ENCODE measurements at regions of chr9 and their contacts with region 1.

Region 1: DNA sequence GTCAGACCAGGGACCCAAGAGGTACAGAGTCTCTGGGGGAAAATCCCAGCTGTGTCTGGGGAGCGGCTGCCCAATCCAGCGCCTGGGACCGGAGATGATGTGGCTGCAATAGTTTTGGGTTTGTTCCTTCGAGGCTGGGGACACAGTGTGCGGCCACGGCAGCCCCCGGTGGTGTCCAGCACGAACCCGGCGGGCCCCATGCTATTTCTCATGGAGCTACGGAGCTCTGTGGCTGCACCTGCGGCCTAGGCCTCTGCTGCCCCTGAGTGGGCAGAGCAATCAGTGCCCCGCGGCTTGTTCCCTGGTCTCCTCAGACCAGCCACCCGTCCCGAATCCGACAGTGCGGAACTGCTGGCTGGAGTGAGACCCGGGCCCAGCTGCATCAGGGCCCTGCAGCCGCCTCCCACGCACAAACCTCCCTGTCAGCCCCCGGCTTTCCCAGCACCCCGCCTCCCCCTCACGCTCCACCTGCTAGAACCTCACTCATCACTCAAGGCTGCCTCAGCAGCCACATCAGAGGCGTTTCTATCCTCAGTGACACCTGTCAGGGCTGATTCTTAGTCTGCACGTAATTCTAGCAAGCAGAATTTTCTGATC is 29.0 kb downstream of the SARDH start:
- DNase-seq: peak; percentile 47 to 90 (median 73)
- ATAC-seq: peak; percentile 99
- H3K4me3 ChIP-seq: no peak overlapping the region
- H3K4me3 Mint-ChIP-seq: peak overlapping the region; percentile 60
- H3K27ac ChIP-seq: no peak overlapping the region
- H3K27ac Mint-ChIP-seq: peak overlapping the region; percentile 85
- H3K4me1 ChIP-seq: peaks cover 57% of the 10 kb centered on the region
- H3K4me1 Mint-ChIP-seq: peaks cover 39% of the 10 kb centered on the region
- H3K27me3 ChIP-seq: no peaks in the 10 kb centered on the region
- H3K27me3 Mint-ChIP-seq: no peaks in the 10 kb centered on the region
- CTCF ChIP-seq: peak; percentile 8

Region 2: GRCh38 chr9:133609311-133610098 is 99.6 kb before region 1 on chr9 and contains the start of gene FAM163B:
- CTCF ChIA-PET with region 1: no interaction called
- POLR2A ChIA-PET with region 1: no interaction called
- intact Hi-C with region 1: loop called in 1 of 2 experiments (anchors 5 kb)
- DNase-seq: peak in 13 of 14 experiments; percentile 11 to 76 (median 36)
- ATAC-seq: peak; percentile 78
- H3K4me3 ChIP-seq: no peak within 1 kb of the TSS
- H3K4me3 Mint-ChIP-seq: no peak within 1 kb of the TSS
- H3K27ac ChIP-seq: no peak within 1 kb of the TSS
- H3K27ac Mint-ChIP-seq: no peak within 1 kb of the TSS
- H3K4me1 ChIP-seq: peaks cover 8% of the 10 kb centered on the region
- H3K4me1 Mint-ChIP-seq: no peaks in the 10 kb centered on the region
- H3K27me3 ChIP-seq: peaks cover 21 to 38% of the 10 kb centered on the region in 2 experiments
- H3K27me3 Mint-ChIP-seq: peaks cover 52% of the 10 kb centered on the region
- CTCF ChIP-seq: no peak
- total RNA-seq, gene FAM163B: not detected

Region 3: DNA sequence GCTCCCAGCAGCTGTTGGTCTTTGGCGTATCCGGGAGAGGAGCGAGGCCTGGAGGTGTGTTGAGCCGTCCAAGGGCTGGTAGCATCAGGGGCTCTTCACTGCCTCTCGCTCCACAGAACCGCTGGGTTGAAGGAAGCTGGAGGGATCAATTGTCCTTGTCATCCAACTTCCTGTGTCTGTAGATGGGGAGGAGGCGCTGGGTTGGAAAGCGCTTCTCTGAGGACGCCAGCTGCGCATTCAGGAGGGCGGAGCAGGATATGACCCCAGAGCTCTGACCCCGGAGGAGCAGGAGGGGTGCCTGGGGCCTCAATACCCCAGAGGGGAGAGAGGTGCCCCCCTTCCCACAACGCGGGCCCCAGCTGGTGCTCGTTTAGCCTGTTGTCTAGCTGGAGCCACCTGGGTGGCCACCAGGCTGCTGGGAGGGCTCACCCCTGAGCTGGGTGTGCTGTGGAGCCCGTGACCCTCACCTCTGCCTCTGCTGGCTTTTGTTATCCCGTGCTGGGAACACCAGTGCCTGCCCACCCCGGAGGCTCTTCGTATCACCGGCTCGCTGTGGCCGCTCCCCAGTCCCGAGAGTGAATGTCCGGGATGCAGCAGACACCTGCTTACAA is 74.9 kb before region 1 on chr9:
- CTCF ChIA-PET with region 1: no interaction called
- POLR2A ChIA-PET with region 1: no interaction called
- intact Hi-C with region 1: no loop called
- DNase-seq: no peak
- ATAC-seq: no peak
- H3K4me3 ChIP-seq: no peak overlapping the region
- H3K4me3 Mint-ChIP-seq: no peak overlapping the region
- H3K27ac ChIP-seq: no peak overlapping the region
- H3K27ac Mint-ChIP-seq: no peak overlapping the region
- H3K4me1 ChIP-seq: no peaks in the 10 kb centered on the region
- H3K4me1 Mint-ChIP-seq: no peaks in the 10 kb centered on the region
- H3K27me3 ChIP-seq: no peaks in the 10 kb centered on the region
- H3K27me3 Mint-ChIP-seq: no peaks in the 10 kb centered on the region
- CTCF ChIP-seq: no peak

Region 4: DNA sequence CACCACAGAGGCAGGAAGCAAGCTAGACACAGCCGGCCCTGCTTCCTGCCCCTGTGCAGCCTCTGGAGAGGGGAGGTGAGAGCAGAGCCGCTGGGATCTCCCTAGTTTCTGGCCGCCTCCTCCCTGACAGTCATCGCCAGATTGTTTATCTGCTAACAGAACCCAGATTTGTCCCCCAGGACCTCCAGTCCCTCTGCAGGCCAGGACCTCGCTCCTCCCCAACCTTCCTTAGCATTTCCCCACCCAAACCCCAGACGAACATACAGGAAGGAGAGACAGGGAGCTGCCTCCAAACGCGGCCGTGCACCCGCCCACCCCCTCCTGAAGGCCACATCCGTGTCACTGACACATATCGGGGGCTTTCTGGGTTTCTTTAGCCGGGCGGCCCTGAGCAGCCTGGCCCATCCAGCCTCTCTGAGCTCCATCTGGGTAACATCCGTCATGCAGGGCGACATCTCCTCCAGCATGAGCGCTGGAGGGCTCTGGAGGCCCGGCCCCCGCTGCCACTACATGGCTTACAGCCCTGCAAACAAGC is 25.5 kb before region 1 on chr9:
- CTCF ChIA-PET with region 1: no interaction called
- POLR2A ChIA-PET with region 1: interaction called, 104 read pairs
- intact Hi-C with region 1: no loop called
- DNase-seq: peak; percentile 62 to 91 (median 78)
- ATAC-seq: peak; percentile 83
- H3K4me3 ChIP-seq: peak overlapping the region; percentile 31
- H3K4me3 Mint-ChIP-seq: peak overlapping the region; percentile 84
- H3K27ac ChIP-seq: peak overlapping the region; percentile 90 to 96
- H3K27ac Mint-ChIP-seq: peak overlapping the region; percentile 98
- H3K4me1 ChIP-seq: peaks cover 51% of the 10 kb centered on the region
- H3K4me1 Mint-ChIP-seq: peaks cover 42% of the 10 kb centered on the region
- H3K27me3 ChIP-seq: no peaks in the 10 kb centered on the region
- H3K27me3 Mint-ChIP-seq: no peaks in the 10 kb centered on the region
- CTCF ChIP-seq: no peak

Measured in CD4-positive, alpha-beta T cell (primary cell).